Calu3 (cell line): ENCODE measurements at regions of chr17 and their contacts with region 1.

Region 1: DNA sequence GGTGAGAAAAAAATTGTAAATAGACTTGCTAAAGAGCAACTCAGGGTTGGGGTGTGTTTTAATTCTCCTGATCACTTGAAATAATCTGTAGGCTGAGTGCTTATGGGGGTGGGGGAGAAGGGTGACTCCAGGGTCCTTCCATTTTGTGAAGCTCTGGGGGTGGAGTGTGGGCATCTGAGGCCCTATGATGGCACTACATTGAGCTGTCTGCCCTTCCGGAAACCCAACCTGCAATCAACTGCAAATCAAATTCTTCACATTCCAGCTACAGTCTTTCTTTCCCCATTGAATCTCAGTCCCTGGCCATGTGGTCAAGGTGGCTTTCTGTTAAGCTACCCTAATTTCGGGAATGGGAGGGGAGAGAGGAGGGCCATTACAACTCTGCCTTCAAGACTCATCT is 6.0 kb upstream of the CDC6 start:
- DNase-seq: peak; percentile 80
- H3K4me3 Mint-ChIP-seq: peak overlapping the region; percentile 22
- H3K27ac Mint-ChIP-seq: peak overlapping the region; percentile 90
- H3K4me1 Mint-ChIP-seq: peaks cover 71% of the 10 kb centered on the region
- H3K27me3 Mint-ChIP-seq: no peaks in the 10 kb centered on the region
- CTCF ChIP-seq: no peak

Region 2: DNA sequence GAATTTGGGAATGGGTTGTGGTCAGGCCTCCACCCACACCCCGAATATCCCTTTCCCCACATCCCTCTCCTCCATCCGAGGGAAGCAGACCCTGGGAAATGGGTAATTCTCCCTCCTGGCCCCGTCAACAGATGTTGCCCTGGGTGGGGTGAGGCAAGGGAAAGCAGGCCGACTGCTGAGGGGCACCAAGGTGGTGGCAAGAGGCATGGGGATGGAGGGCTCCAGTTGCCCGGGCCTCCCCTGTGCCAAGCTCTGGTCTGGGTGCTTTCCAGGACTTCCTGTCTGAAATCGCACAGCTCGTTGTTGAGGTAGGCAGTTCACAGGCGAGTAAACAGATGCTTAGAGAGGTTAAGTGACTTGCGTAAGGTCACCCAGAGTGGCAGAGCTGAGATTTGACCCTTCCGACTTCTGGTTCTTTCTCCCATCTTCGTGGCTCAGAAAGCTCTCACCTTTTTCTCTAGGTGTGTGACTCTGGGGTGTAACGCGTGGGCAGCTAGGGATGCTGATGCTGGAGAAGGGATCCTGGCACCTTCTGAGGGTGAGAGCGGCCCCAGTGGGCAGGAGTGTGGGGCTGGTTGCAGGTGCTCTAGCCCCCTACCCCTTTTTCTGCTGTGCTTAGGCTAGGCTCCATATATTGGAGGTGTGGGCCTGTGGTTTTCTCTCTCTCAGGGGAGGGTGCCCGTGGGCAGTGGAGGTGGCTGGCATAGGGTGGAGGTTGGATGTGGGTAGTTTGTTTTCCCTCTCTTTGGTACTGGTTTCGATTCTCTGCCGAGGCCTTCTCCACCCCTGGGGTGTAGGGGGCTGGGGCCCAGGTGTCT is 44.6 kb after region 1 on chr17:
- CTCF ChIA-PET with region 1: interaction called, 10 read pairs
- intact Hi-C with region 1: no loop called
- DNase-seq: no peak
- H3K4me3 Mint-ChIP-seq: no peak overlapping the region
- H3K27ac Mint-ChIP-seq: peak overlapping the region; percentile 8
- H3K4me1 Mint-ChIP-seq: peaks cover 93% of the 10 kb centered on the region
- H3K27me3 Mint-ChIP-seq: no peaks in the 10 kb centered on the region
- CTCF ChIP-seq: no peak